ENCODE measurements at regions of chr4 and their contacts with region 1.

Region 1: DNA sequence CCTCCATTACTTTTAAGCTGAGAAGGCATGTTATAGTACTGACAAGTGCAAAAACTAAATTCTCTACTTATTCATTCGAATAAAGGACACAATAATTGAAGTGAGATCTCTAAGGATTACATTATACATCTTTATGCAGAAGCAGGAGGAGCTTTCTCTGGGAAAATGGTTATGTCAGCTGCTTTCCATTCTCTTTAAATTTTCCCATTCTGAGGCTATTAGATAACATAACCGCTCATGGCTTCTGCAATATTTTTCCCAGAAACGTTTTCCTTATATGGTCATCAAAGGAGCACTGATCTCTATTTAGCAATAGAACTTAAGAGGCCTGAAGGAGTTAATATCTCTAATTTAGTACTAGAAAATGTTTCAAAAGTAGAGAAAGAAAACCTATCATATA is 221.6 kb downstream of the NSUN7 start:
- DNase-seq: no peak
- H3K4me3 ChIP-seq: no peak overlapping the region
- H3K27ac ChIP-seq: no peak overlapping the region
- H3K4me1 ChIP-seq: no peaks in the 10 kb centered on the region
- H3K27me3 ChIP-seq: no peaks in the 10 kb centered on the region
- CTCF ChIP-seq: no peak

Region 2: DNA sequence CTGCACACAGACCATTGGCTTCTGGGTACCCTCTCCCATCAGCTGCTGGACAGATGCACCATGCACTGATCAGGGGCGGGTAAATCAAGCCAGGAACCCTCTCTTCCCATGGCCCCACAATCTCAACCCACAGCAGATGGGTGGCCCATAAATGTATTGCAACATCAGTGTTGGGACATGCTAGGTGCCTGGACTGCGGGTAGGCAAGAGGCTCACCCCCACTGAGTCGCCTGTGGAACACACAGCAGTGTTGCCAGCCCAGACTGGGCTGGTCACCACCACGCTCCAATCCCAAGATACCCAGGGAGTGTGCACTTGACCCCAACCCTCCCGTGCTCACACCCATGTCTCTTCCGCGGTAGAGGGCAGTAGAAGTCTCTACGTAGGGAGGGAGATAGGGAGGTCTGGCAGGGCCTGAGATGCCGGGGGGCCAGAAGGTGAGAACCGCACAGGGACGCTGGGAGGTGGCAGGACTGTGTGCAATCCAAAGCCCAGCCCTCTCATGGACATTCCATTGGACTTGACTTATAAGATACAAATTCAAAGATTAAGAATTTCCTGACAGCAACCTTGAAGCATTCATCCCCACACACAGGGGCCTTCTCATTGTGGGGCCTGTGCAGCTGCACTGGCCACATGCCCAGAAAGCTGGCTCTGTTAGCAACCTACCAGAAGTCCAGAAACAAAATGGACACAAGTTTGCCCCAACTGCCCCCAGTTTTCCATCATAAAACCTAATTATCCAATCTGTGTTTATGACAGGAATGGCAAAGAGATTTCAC is 37.9 kb before region 1 on chr4:
- CTCF ChIA-PET with region 1: no interaction called
- POLR2A ChIA-PET with region 1: no interaction called
- intact Hi-C with region 1: loop called (anchors 2 kb)
- DNase-seq: no peak
- H3K4me3 ChIP-seq: no peak overlapping the region
- H3K27ac ChIP-seq: no peak overlapping the region
- H3K4me1 ChIP-seq: no peaks in the 10 kb centered on the region
- H3K27me3 ChIP-seq: no peaks in the 10 kb centered on the region
- CTCF ChIP-seq: no peak